Left colon (tissue), 2 donors: ENCODE measurements at regions of chr4 and their contacts with region 1.

Region 1: GRCh38 chr4:121360495-121360894 is 20.3 kb downstream of the QRFPR start:
- DNase-seq: no peak
- ATAC-seq: no peak

Region 2: GRCh38 chr4:121041307-121042090 is 319.0 kb before region 1 on chr4:
- intact Hi-C with region 1: no loop called
- DNase-seq: no peak
- ATAC-seq: no peak

Region 3: GRCh38 chr4:121411151-121411744 is 50.8 kb after region 1 on chr4:
- intact Hi-C with region 1: loop called in 1 of 2 experiments (anchors 10 kb)
- DNase-seq: no peak
- ATAC-seq: peak; percentile 47